Endothelial cell of umbilical vein (primary cell): ENCODE measurements at regions of chr4 and their contacts with region 1.

Region 1: DNA sequence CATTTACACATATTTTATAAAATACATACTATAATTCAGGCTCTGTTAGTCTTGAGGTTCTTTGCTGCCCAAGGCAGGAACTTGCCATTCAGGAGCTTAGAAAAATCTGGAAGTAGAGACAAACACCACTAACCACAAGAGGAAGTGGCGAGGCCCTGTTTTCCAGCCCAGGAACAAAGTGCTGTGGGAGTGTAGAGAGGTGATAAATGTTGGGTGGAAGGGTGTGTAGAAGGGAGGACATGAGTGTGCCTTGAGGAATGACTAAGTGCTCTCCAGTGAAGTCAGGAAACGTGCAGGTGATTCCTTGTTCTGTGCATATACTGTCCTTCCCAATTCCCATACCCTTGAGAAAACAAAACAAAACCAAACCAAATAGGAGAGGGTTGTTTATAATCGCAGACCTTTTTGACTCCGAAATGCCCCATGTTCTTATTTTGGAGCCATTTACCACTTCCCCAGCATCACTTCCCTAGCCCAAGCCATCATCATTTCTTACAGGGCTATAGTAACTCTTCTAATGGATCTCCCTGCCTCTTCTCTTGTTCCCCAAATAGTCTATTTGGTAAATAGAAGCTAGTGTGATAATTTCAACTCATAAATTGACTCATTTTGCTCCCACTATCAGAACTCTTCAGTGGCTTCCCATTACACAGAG is 83.2 kb downstream of the GPAT3 start:
- DNase-seq: peak; percentile 26
- H3K4me3 ChIP-seq: no peak overlapping the region
- H3K27ac ChIP-seq: peak overlapping the region; percentile 58
- H3K4me1 ChIP-seq: peaks cover 22% of the 10 kb centered on the region
- H3K27me3 ChIP-seq: no peaks in the 10 kb centered on the region
- CTCF ChIP-seq: no peak
- POLR2A ChIP-seq: no peak

Region 2: DNA sequence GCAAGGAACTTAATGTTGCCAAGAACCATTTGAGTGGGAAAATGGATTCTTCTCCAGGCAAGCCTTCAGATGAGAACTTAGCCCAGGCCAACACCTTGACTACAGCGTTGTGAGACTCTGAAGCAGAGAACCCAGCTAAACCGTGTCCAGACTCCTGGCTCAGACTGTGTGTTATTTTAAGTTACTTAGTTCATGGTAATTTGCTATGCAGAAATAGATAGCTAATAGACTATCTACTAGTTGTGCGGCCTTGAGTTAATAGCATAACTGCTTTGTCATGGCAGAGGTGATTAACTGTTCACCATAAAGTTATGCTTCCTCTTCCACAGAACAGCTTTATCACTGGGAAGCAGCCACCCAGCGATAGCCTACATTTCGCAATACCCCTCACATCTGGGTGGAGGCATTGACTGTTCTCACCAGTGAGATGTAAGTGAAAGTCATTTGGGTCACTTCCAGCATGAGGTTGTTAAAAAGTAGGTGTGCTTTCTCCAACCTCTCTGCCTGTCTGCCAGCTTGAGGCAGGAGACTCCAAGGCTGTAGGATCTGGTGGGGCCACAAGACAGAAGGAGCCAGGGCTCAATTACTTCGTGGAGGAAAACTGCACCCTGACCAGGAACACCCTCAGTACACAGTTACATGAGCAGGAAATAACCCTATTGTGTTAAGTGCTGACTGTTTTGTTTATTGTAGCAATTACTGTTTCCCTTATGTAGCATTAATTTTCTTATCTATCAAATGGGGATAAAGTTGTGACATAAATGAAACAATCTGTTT is 11.0 kb after region 1 on chr4:
- CTCF ChIA-PET with region 1: interaction called, 7 read pairs
- POLR2A ChIA-PET with region 1: no interaction called
- dilution Hi-C with region 1: no loop called
- intact Hi-C with region 1: loop called (anchors 1 kb)
- DNase-seq: peak; percentile 92
- H3K4me3 ChIP-seq: no peak overlapping the region
- H3K27ac ChIP-seq: peak overlapping the region; percentile 57
- H3K4me1 ChIP-seq: peaks cover 20% of the 10 kb centered on the region
- H3K27me3 ChIP-seq: no peaks in the 10 kb centered on the region
- CTCF ChIP-seq: no peak
- POLR2A ChIP-seq: no peak